Calu3 (cell line): ENCODE measurements at regions of chr3 and their contacts with region 1.

Region 1: DNA sequence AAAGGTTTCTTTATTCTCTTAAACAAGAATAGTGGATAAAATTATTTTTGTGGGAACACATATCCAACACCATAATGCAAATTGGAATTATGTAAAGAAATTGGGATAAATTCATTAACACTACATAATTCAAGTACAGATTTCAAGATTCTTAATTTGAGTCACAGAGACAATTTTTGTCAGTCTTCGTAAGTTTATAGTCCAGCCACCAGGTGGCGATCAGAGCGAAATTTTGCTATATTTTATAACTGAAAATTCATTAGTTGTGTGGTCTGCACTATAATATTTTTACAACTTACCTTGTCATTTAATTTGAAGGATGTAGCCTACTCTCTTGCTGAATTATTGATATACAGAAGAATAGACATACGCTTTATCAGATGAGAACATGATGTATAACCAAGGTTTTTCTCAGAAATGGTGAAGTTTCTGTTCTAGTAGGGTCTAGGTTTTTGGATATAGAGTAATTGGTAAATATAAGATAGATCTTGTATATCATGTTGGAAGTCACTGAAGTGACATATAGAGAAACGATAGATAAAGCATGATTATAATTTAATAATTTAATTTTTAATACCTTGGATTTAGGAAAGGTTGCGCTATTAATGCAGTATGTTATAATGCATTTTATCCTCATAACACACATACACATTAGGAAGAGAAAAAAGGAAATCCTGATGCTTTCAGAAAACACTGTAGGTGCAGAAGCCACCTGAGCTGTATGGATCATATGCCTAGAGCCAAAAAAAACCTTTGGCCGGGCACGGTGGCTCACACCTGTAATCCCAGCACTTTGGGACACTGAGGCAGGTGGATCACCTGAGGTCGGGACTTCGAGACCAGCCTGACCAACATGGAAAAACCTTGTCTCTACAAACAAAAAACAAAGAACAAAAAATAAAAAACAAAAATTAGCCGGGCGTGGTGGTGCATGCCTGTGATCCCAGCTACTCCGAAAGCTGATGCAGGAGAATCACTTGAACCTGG is 31.7 kb downstream of the PLSCR4 start:
- DNase-seq: peak; percentile 75
- H3K4me3 Mint-ChIP-seq: no peak overlapping the region
- H3K27ac Mint-ChIP-seq: no peak overlapping the region
- H3K4me1 Mint-ChIP-seq: peaks cover 38% of the 10 kb centered on the region
- H3K27me3 Mint-ChIP-seq: no peaks in the 10 kb centered on the region
- CTCF ChIP-seq: peak; percentile 79

Region 2: DNA sequence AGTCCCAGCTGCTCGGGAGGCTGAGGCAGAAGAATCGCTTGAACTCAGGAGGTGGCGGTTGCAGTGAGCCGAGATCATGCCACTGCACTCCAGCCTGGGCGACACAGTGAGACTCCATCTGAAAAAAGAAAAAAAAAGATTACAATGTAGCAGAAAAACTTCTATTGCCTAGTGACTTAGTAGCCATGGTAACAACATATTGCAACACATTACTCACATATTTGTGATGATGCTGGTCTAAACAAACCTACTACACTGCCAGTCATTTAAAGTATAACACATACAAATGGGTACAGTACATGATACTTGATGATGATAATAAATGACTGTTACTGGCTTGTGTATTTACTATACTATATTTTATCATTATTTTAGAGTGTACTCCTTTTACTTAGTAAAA is 183.8 kb before region 1 on chr3:
- CTCF ChIA-PET with region 1: no interaction called
- intact Hi-C with region 1: no loop called
- DNase-seq: no peak
- H3K4me3 Mint-ChIP-seq: no peak overlapping the region
- H3K27ac Mint-ChIP-seq: no peak overlapping the region
- H3K4me1 Mint-ChIP-seq: no peaks in the 10 kb centered on the region
- H3K27me3 Mint-ChIP-seq: no peaks in the 10 kb centered on the region
- CTCF ChIP-seq: no peak

Region 3: GRCh38 chr3:146189519-146190173 is 29.5 kb before region 1 on chr3:
- CTCF ChIA-PET with region 1: interaction called, 26 read pairs
- intact Hi-C with region 1: loop called (anchors 1 kb)
- DNase-seq: peak; percentile 57
- H3K4me3 Mint-ChIP-seq: peak overlapping the region; percentile 26
- H3K27ac Mint-ChIP-seq: peak overlapping the region; percentile 66
- H3K4me1 Mint-ChIP-seq: peaks cover 14% of the 10 kb centered on the region
- H3K27me3 Mint-ChIP-seq: no peaks in the 10 kb centered on the region
- CTCF ChIP-seq: peak; percentile 81

Region 4: DNA sequence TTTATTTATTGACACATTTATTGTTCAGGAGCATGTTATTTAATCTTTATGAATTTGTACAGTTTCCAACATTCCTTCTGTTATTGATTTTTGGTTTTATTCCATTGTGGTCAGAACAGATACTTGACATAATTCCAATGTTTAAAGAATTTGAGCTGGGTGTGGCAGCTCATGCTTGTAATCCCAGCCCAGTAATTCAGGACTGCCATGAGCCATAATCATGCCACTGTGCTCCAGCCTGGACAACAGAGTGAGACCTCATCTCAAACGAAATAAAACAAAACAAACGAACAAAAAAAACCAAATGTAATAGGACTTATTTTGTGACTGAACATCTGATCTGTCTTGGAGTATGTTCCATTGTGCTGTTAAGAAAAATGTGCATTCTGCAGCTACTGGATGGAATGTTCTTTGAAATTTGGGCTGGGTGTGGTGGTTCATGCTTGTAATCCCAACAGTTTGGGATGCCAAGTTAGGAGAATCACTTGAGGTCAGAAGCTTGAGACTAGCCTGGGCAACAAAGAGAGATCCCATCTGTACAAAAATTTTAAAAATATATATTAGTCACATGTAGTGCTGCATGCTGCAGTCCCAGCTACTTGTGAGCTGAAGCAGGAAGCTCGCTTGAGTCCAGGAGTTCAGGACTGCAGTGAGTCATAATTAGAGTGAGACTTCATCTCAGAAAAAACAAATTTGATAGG is 94.4 kb after region 1 on chr3:
- CTCF ChIA-PET with region 1: interaction called, 12 read pairs
- intact Hi-C with region 1: loop called (anchors 1 kb)
- DNase-seq: peak; percentile 64
- H3K4me3 Mint-ChIP-seq: peak overlapping the region; percentile 15
- H3K27ac Mint-ChIP-seq: peak overlapping the region; percentile 11
- H3K4me1 Mint-ChIP-seq: peaks cover 54% of the 10 kb centered on the region
- H3K27me3 Mint-ChIP-seq: no peaks in the 10 kb centered on the region
- CTCF ChIP-seq: no peak

Region 5: DNA sequence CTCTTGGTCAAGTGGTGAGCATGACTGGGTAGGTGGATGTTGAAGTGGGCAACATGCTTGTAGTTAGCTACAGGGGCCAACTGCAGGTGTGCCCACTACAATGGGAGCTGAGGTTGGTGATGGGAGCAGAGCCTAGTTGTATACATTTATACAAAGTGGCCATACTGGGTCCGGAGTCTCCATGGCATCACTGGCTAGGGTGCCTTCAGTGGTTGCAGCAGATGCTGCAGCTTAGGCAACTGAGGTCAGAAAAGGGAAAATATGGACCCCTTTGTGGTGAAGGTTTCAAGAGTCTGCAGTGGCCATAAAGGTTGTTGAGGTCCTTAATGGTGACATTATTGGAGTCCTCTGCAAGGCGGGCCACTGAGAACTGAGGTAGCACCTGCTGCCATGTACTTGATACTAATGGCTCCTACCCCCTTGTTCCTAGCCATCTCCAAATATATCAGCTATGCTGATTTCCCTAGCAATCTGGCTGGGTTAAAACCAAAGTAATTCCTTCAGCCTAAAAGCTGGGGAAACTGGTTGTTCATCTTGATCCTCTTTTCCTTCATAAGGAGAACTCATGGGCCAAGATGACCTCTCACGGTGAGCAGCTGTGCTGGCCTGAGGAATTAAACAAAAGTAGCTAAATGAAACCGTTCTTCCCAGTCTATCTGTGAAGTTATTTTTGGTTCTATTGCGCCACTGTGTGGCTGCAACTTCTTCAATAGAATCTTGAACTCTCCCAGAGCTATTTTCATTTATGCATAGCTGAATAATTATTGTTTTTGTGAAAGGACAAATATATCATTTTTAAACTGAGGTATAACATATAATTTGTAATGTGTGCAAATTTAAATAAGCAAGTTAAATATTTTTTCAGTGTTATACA is 107.7 kb after region 1 on chr3:
- CTCF ChIA-PET with region 1: interaction called, 170 read pairs
- intact Hi-C with region 1: loop called (anchors 1 kb)
- DNase-seq: peak; percentile 55
- H3K4me3 Mint-ChIP-seq: no peak overlapping the region
- H3K27ac Mint-ChIP-seq: no peak overlapping the region
- H3K4me1 Mint-ChIP-seq: no peaks in the 10 kb centered on the region
- H3K27me3 Mint-ChIP-seq: no peaks in the 10 kb centered on the region
- CTCF ChIP-seq: peak; percentile 60

Region 6: DNA sequence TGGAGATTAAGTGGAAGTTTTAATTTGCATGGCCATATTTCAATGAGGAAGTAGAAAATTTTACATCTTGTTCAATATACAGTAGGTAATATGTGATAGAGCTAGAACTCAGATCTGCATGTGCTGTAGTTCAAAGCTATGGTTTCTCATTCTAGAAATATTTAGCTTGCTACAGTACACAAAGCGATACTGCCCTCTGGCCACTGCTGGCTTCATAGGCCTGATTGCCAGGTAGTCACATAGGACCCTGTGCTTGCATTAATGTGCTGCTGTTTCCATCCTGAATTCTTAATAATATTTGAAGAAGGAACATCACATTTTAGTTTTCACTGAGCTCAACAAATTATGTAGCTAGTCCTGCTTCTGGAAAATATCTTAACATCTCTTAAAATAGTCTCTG is 163.2 kb after region 1 on chr3:
- CTCF ChIA-PET with region 1: no interaction called
- intact Hi-C with region 1: loop called (anchors 5 kb)
- DNase-seq: peak; percentile 53
- H3K4me3 Mint-ChIP-seq: no peak overlapping the region
- H3K27ac Mint-ChIP-seq: no peak overlapping the region
- H3K4me1 Mint-ChIP-seq: peaks cover 18% of the 10 kb centered on the region
- H3K27me3 Mint-ChIP-seq: no peaks in the 10 kb centered on the region
- CTCF ChIP-seq: no peak

Region 7: GRCh38 chr3:146503461-146504202 is 284.5 kb after region 1 on chr3:
- CTCF ChIA-PET with region 1: interaction called, 8 read pairs
- intact Hi-C with region 1: loop called (anchors 2 kb)
- DNase-seq: peak; percentile 88
- H3K4me3 Mint-ChIP-seq: peak overlapping the region; percentile 69
- H3K27ac Mint-ChIP-seq: peak overlapping the region; percentile 100
- H3K4me1 Mint-ChIP-seq: peaks cover 58% of the 10 kb centered on the region
- H3K27me3 Mint-ChIP-seq: no peaks in the 10 kb centered on the region
- CTCF ChIP-seq: peak; percentile 21